ENCODE measurements at regions of chr22 and their contacts with region 1.

Region 1: GRCh38 chr22:28999919-29000556 is 61.6 kb downstream of the C22orf31 start:
- DNase-seq: no peak
- ATAC-seq: no peak
- H3K4me3 ChIP-seq: no peak overlapping the region
- H3K27ac ChIP-seq: no peak overlapping the region
- H3K4me1 ChIP-seq: peaks cover 0 to 26% (median 15%) of the 10 kb centered on the region in 9 donors
- H3K27me3 ChIP-seq: peaks cover 0 to 5% (median 0%) of the 10 kb centered on the region in 7 donors
- CTCF ChIP-seq: no peak

Region 2: DNA sequence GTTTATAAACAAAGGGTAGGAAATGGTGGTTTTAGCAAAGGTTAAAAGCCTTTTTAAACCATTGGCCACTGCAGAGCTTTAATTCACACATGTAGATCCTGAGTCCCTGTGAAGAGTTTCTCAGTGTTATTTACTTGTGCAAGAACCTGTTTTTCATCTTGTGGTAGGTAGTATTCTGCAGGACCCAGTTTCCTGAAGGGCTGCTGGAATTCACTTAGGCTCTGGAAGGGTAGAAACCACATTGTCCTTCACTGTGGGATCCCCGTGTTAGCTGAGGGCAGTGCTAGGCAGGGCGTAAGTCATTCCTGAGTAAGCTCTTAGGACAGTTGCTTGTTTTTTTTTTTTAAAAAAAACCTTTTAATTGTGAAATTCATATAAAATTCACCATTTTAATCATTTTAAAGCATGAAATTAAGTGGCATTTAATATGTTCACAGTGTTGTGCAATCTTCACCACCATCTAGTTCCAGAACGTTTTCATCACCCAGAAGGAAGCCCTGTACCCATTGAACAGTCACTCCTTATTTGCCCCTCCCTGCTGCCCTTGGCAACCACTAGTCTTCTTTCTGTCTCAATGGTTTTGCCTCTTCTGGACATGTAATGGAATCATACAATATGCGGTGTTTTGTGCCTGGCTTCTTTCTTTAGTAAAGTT is 16.1 kb before region 1 on chr22:
- intact Hi-C with region 1: loop called in 1 of 10 experiments (anchors 2 kb)
- DNase-seq: no peak
- ATAC-seq: no peak
- H3K4me3 ChIP-seq: no peak overlapping the region
- H3K27ac ChIP-seq: no peak overlapping the region
- H3K4me1 ChIP-seq: peaks cover 0 to 1% (median 0%) of the 10 kb centered on the region in 9 donors
- H3K27me3 ChIP-seq: no peaks in the 10 kb centered on the region
- CTCF ChIP-seq: no peak